ENCODE measurements at regions of chr11 and their contacts with region 1.

Region 1: GRCh38 chr11:31958076-31958735 is 132.7 kb upstream of the RCN1 start:
- DNase-seq: peak; percentile 93
- H3K4me3 ChIP-seq: no peak overlapping the region
- H3K27ac ChIP-seq: no peak overlapping the region
- H3K4me1 ChIP-seq: no peaks in the 10 kb centered on the region
- H3K27me3 ChIP-seq: no peaks in the 10 kb centered on the region
- CTCF ChIP-seq: peak; percentile 100

Region 2: GRCh38 chr11:31240338-31240904 is 717.8 kb before region 1 on chr11:
- CTCF ChIA-PET with region 1: interaction called, 5 read pairs
- POLR2A ChIA-PET with region 1: no interaction called
- intact Hi-C with region 1: loop called (anchors 2 kb)
- DNase-seq: peak; percentile 91
- H3K4me3 ChIP-seq: no peak overlapping the region
- H3K27ac ChIP-seq: no peak overlapping the region
- H3K4me1 ChIP-seq: peaks cover 20% of the 10 kb centered on the region
- H3K27me3 ChIP-seq: no peaks in the 10 kb centered on the region
- CTCF ChIP-seq: peak; percentile 99

Region 3: DNA sequence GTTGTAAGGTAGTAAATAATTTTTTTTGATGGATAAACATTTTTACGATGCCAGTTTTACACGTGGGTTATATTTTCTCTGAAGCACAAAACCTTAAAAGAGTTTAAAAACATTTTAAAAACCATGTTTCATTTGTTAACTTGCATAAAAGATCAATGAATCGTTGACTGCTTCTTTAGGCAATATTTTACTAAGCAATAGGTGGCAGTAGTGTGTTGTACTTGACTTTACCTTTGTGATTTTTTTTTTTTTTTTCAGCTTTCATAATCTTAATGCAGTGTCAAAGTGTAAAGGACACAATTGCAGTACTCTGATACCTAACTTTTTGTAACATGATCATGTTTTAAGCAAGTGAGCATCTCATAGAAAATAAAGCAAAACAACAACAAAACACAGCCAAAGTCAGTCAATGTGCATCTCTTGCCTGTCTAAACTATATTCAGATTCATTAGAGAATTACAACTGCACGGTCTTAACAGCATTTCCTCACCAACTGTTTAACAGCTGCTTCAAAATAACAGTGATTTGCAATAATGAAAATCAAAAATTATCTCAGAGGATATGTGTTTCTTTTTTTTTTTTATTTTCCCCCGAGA is 560.9 kb before region 1 on chr11:
- CTCF ChIA-PET with region 1: interaction called, 3 read pairs
- POLR2A ChIA-PET with region 1: no interaction called
- intact Hi-C with region 1: loop called (anchors 1 kb)
- DNase-seq: peak; percentile 69
- H3K4me3 ChIP-seq: no peak overlapping the region
- H3K27ac ChIP-seq: no peak overlapping the region
- H3K4me1 ChIP-seq: no peaks in the 10 kb centered on the region
- H3K27me3 ChIP-seq: no peaks in the 10 kb centered on the region
- CTCF ChIP-seq: peak; percentile 99

Region 4: DNA sequence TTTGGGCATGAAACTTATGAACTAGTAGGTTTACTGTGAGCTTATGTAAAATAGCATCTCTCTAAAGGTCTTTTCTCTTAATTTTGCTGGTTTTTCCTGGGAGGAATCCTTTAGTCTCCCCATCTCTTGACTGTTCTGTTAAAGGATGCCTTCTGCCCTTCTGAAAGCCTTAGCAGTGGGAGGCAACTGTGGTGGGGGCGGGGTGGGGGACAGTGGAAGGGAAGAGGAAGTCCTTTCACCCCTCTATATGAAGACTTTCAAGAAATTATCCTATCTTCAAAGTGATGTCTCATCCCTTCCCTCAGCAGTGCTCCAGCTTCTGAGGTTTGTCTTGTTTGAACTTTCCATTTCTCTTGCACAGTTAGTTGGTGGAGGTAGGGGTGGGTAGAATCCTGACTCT is 375.5 kb before region 1 on chr11:
- CTCF ChIA-PET with region 1: no interaction called
- POLR2A ChIA-PET with region 1: no interaction called
- intact Hi-C with region 1: no loop called
- DNase-seq: no peak
- H3K4me3 ChIP-seq: no peak overlapping the region
- H3K27ac ChIP-seq: no peak overlapping the region
- H3K4me1 ChIP-seq: no peaks in the 10 kb centered on the region
- H3K27me3 ChIP-seq: no peaks in the 10 kb centered on the region
- CTCF ChIP-seq: no peak

Region 5: GRCh38 chr11:31641477-31642062 is 316.6 kb before region 1 on chr11:
- CTCF ChIA-PET with region 1: interaction called, 5 read pairs
- POLR2A ChIA-PET with region 1: no interaction called
- intact Hi-C with region 1: loop called (anchors 5 kb)
- DNase-seq: peak; percentile 74
- H3K4me3 ChIP-seq: no peak overlapping the region
- H3K27ac ChIP-seq: no peak overlapping the region
- H3K4me1 ChIP-seq: peaks cover 11% of the 10 kb centered on the region
- H3K27me3 ChIP-seq: no peaks in the 10 kb centered on the region
- CTCF ChIP-seq: peak; percentile 99

Region 6: GRCh38 chr11:31968461-31969358 is 10.5 kb after region 1 on chr11:
- CTCF ChIA-PET with region 1: interaction called, 10 read pairs
- POLR2A ChIA-PET with region 1: no interaction called
- intact Hi-C with region 1: no loop called
- DNase-seq: no peak
- H3K4me3 ChIP-seq: no peak overlapping the region
- H3K27ac ChIP-seq: no peak overlapping the region
- H3K4me1 ChIP-seq: peaks cover 15% of the 10 kb centered on the region
- H3K27me3 ChIP-seq: peaks cover 53% of the 10 kb centered on the region
- CTCF ChIP-seq: no peak